Vagina (tissue), 2 donors: ENCODE measurements at regions of chr9 and their contacts with region 1.

Region 1: GRCh38 chr9:120235081-120235480 is 344.9 kb downstream of the CDK5RAP2 start:
- DNase-seq: no peak
- H3K4me3 ChIP-seq: no peak overlapping the region
- H3K27ac ChIP-seq: no peak overlapping the region
- H3K4me1 ChIP-seq: no peaks in the 10 kb centered on the region
- H3K27me3 ChIP-seq: no peaks in the 10 kb centered on the region
- CTCF ChIP-seq: no peak
- POLR2A ChIP-seq: no peak

Region 2: DNA sequence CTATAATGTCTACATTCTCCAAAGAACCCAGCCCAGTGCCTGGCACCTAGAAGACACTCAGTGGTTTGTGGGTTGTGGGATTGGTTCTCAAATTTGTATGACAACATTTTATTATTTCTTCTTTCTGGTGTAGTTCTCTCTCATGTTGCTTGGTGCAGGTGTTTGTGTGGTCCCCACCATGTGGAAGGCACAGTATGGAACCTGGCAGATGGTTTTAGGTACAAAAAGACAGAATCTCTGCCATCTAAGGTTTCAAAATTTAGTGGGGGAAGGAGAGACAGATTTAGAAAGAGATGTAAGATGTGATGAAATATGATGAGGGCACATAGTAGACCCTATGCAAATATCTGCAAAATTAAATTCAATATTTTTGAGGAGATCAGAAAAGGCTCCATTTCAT is 21.1 kb after region 1 on chr9:
- intact Hi-C with region 1: loop called (anchors 1 kb)
- DNase-seq: no peak
- H3K4me3 ChIP-seq: no peak overlapping the region
- H3K27ac ChIP-seq: no peak overlapping the region
- H3K4me1 ChIP-seq: no peaks in the 10 kb centered on the region
- H3K27me3 ChIP-seq: no peaks in the 10 kb centered on the region
- CTCF ChIP-seq: no peak
- POLR2A ChIP-seq: no peak